Gastrocnemius medialis (tissue), 4 donors: ENCODE measurements at regions of chr4 and their contacts with region 1.

Region 1: DNA sequence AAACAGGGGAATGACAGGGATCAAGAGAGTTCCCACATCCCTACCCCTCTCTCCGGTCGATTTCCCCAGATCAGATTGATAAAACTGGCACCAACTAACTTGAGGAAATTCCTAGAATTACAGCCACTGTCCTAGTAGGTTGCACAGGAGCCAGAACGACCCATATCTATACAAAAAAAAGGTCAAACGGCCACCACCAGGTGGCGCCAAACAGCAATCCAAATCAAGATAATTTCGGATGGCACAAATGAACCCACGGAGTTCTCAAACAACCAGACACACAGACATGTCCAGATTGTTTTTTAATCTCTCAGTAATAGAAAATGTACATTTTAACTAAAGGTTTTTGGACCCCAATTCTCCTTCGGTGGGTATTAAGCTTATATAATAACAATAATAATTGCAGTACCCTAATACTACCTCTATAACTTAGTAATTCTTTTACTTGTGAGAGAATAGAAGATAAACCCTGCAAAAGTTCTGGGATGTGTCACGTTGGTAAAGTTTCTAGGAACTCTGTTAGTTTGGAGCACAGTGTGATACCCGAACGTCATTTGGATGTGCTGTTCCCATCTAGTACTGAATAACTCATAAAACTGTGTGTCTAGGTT is 212.6 kb downstream of the SPOCK3 start:
- DNase-seq: peak; percentile 12 to 32
- ATAC-seq: peak; percentile 54 to 55
- H3K4me3 ChIP-seq: no peak overlapping the region
- H3K27ac ChIP-seq: no peak overlapping the region
- H3K4me1 ChIP-seq: no peaks in the 10 kb centered on the region
- H3K27me3 ChIP-seq: no peaks in the 10 kb centered on the region
- CTCF ChIP-seq: peak; percentile 32 to 73 (median 58)
- POLR2A ChIP-seq: no peak

Region 2: DNA sequence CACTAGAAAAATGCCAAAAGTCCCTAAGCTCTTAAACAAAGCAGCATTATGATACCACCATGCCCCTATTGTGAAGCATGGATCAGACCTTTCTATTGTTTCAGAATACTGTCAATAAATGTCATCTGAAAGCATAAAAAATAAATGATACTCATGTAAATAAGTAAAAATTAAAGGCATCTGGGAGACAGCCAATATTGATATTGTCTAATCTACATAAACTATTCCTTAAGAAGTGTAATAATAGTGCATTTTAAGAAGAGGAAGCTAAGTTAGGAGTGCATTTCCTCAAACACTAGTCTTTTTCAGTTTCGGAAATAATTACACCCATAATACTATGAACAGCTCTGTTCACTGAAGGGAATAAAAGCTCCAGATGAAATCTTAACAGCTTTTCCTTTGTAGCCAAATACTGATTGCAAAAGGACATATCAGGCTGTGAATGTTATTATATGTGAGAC is 31.0 kb after region 1 on chr4:
- in situ Hi-C with region 1: no loop called
- intact Hi-C with region 1: no loop called
- DNase-seq: no peak
- ATAC-seq: no peak
- H3K4me3 ChIP-seq: no peak overlapping the region
- H3K27ac ChIP-seq: no peak overlapping the region
- H3K4me1 ChIP-seq: no peaks in the 10 kb centered on the region
- H3K27me3 ChIP-seq: no peaks in the 10 kb centered on the region
- CTCF ChIP-seq: no peak
- POLR2A ChIP-seq: no peak

Region 3: GRCh38 chr4:167079762-167080161 is 58.1 kb after region 1 on chr4:
- in situ Hi-C with region 1: no loop called
- intact Hi-C with region 1: no loop called
- DNase-seq: no peak
- ATAC-seq: no peak
- H3K4me3 ChIP-seq: no peak overlapping the region
- H3K27ac ChIP-seq: no peak overlapping the region
- H3K4me1 ChIP-seq: no peaks in the 10 kb centered on the region
- H3K27me3 ChIP-seq: no peaks in the 10 kb centered on the region
- CTCF ChIP-seq: no peak
- POLR2A ChIP-seq: no peak

Region 4: GRCh38 chr4:167290678-167291077 is 269.0 kb after region 1 on chr4:
- in situ Hi-C with region 1: loop called in 1 of 4 experiments (anchors 10 kb)
- intact Hi-C with region 1: loop called (anchors 5 kb)
- DNase-seq: no peak
- ATAC-seq: no peak
- H3K4me3 ChIP-seq: no peak overlapping the region
- H3K27ac ChIP-seq: no peak overlapping the region
- H3K4me1 ChIP-seq: no peaks in the 10 kb centered on the region
- H3K27me3 ChIP-seq: no peaks in the 10 kb centered on the region
- CTCF ChIP-seq: peak in 1 of 5 experiments; percentile 8
- POLR2A ChIP-seq: no peak

Region 5: DNA sequence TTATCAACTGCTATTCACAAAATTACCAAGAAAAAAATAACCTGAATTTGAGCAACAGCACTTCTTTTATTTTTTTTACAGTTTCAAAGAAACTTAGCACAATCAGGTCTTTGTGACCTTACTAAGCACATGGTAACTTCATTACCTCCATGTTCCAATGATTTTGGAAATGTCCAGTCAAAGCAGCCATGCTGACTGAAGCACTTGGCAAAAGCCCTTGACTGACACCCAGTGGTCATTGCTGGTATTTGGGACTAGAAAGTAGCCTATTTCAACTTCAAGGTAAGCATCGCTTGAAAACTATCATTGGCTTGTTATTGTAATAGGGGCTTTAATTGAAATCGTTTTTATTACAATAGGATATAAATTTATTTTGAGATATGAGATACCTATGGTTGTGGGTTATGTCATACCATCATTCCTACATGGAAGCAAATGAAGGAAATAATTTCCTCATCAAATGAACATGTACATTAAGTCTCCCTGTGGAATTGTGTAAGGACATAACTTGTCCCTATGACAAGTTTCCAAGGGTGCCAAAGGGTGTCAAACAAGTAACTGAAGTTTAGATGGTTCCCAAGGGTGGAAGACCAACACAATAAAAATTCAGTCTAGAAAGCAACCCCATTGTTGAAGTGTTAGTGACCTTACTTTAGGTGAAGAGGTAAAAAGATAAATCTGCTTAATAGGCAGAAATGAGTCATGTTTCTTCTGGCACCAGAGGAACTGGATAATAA is 1055.5 kb after region 1 on chr4:
- in situ Hi-C with region 1: loop called in 2 of 4 experiments (anchors 10 to 25 kb)
- intact Hi-C with region 1: loop called (anchors 5 kb)
- DNase-seq: peak in 1 of 2 donors; percentile 12
- ATAC-seq: peak in 1 of 2 donors; percentile 55
- H3K4me3 ChIP-seq: no peak overlapping the region
- H3K27ac ChIP-seq: no peak overlapping the region
- H3K4me1 ChIP-seq: no peaks in the 10 kb centered on the region
- H3K27me3 ChIP-seq: no peaks in the 10 kb centered on the region
- CTCF ChIP-seq: peak; percentile 26 to 77 (median 54)
- POLR2A ChIP-seq: no peak

Region 6: DNA sequence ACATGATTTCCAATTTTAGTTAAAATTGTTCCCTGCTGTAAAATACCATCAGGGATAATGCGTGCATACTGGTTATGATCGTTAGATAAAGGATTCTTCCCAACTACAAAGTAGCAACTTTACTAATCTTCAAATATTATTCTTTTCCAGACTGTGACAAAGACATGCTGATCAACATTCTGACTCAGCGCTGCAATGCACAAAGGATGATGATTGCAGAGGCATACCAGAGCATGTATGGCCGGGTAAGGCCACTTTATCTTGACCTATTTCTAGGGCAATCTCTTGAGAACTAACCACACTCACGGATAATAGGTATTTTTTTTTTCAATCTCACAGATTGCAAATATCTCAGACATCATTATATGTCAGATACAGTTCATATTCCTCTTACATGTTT is 1117.7 kb after region 1 on chr4:
- in situ Hi-C with region 1: loop called in 1 of 4 experiments (anchors 25 kb)
- intact Hi-C with region 1: no loop called
- DNase-seq: no peak
- ATAC-seq: no peak
- H3K4me3 ChIP-seq: no peak overlapping the region
- H3K27ac ChIP-seq: no peak overlapping the region
- H3K4me1 ChIP-seq: no peaks in the 10 kb centered on the region
- H3K27me3 ChIP-seq: no peaks in the 10 kb centered on the region
- CTCF ChIP-seq: no peak
- POLR2A ChIP-seq: no peak

Region 7: GRCh38 chr4:168153596-168154440 is 1132.2 kb after region 1 on chr4:
- in situ Hi-C with region 1: loop called in 3 of 4 experiments (anchors 10 to 25 kb)
- intact Hi-C with region 1: loop called (anchors 5 kb)
- DNase-seq: peak; percentile 42 to 70
- ATAC-seq: peak; percentile 47 to 51
- H3K4me3 ChIP-seq: peak overlapping the region; percentile 16 to 43 (median 19)
- H3K27ac ChIP-seq: no peak overlapping the region
- H3K4me1 ChIP-seq: no peaks in the 10 kb centered on the region
- H3K27me3 ChIP-seq: no peaks in the 10 kb centered on the region
- CTCF ChIP-seq: peak; percentile 39 to 69 (median 50)
- POLR2A ChIP-seq: no peak